ENCODE measurements at regions of chr1 and their contacts with region 1.

Region 1: DNA sequence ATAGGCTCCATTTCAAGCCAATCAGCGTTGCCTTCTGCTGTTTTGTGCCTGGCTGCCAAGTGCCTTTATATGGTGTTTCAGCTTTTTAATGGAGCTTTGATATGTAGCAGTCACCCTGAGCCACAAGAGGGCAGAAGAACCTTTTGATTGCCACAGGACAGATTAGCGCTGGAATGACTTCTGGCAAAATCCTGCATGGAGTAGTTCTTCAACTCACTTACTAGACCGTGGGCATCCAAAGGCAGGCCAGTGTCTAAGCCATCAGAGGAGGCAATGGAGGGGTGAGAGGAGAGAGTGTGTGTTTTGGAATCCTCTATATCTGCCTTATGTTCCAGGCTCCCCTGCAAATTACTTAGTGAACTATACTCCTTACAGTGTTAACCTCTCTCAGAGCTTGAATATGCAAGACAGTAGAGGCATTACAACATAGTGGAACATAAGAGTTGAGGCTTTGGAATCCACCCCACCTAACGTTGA is 56.2 kb downstream of the ST3GAL3 start:
- DNase-seq: peak; percentile 39 to 63
- H3K4me3 ChIP-seq: no peak overlapping the region
- H3K27ac ChIP-seq: no peak overlapping the region
- H3K4me1 ChIP-seq: peaks cover 7 to 24% (median 21%) of the 10 kb centered on the region in 4 experiments
- H3K27me3 ChIP-seq: no peaks in the 10 kb centered on the region
- CTCF ChIP-seq: peak; percentile 26 to 93 (median 90)
- EP300 ChIP-seq: no peak
- POLR2A ChIP-seq: no peak
- RAD21 ChIP-seq: peak; percentile 99

Region 2: GRCh38 chr1:43776043-43776761 is 12.7 kb after region 1 on chr1:
- CTCF ChIA-PET with region 1: interaction called, 13 read pairs
- POLR2A ChIA-PET with region 1: interaction called, 3 read pairs
- DNase-seq: no peak
- H3K4me3 ChIP-seq: no peak overlapping the region
- H3K27ac ChIP-seq: no peak overlapping the region
- H3K4me1 ChIP-seq: peaks cover 0 to 3% (median 0%) of the 10 kb centered on the region in 4 experiments; a peak in 1 of 7 replicates
- H3K27me3 ChIP-seq: no peaks in the 10 kb centered on the region
- CTCF ChIP-seq: no peak
- EP300 ChIP-seq: no peak
- POLR2A ChIP-seq: no peak
- RAD21 ChIP-seq: no peak

Region 3: GRCh38 chr1:43844114-43844513 is 80.6 kb after region 1 on chr1:
- CTCF ChIA-PET with region 1: interaction called, 19 read pairs
- POLR2A ChIA-PET with region 1: interaction called, 3 read pairs
- DNase-seq: no peak
- H3K4me3 ChIP-seq: no peak overlapping the region
- H3K27ac ChIP-seq: no peak overlapping the region
- H3K4me1 ChIP-seq: peaks cover 5 to 13% (median 7%) of the 10 kb centered on the region in 4 experiments
- H3K27me3 ChIP-seq: no peaks in the 10 kb centered on the region
- CTCF ChIP-seq: no peak
- EP300 ChIP-seq: no peak
- POLR2A ChIP-seq: no peak
- RAD21 ChIP-seq: no peak

Region 4: GRCh38 chr1:43902058-43902831 is 138.7 kb after region 1 on chr1:
- CTCF ChIA-PET with region 1: interaction called, 36 read pairs
- POLR2A ChIA-PET with region 1: no interaction called
- DNase-seq: no peak
- H3K4me3 ChIP-seq: no peak overlapping the region
- H3K27ac ChIP-seq: no peak overlapping the region
- H3K4me1 ChIP-seq: no peaks in the 10 kb centered on the region
- H3K27me3 ChIP-seq: no peaks in the 10 kb centered on the region
- CTCF ChIP-seq: no peak
- EP300 ChIP-seq: no peak
- POLR2A ChIP-seq: no peak
- RAD21 ChIP-seq: no peak

Region 5: DNA sequence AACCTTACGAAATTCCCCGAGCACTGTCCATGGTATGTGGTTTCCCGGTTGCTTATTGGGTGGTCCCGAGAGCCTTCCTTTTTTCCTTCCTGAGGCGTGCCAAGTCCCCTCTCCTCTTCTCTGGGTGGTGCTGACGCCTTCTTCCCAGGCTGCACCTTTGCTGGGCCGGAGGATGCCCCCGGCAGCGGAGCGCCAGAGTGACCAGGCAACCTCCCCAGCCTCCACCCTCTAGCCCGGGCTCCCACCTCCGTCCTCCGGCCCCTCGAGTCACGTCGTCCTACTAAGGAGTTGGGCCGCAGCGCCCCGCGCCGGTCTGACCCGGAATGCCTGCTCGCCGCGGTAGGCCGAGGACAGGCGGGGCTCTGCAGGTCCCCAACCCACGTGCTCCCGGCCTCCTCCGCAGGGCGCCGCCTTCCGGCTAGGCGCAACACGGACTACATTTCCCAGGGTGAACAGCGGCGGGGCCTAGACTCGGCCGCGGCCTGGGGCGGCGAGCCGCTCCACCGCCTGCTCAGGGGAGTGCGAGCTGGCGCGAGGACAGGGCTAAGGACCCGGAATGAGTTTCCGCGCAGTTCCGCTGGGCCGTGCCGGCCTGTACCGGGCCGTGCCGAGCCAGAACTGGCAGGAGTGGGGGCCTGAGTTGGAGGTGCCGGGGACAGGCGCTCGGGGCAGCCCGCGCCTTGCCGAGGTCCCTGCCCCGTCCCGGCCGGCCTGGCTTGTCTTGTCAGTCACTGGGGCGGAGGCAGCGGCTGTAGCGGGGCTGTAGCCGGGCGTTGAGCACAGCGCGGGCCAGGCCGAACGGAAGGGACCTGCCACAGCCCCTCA is 182.9 kb after region 1 on chr1 and contains the start of gene IPO13:
- CTCF ChIA-PET with region 1: interaction called, 112 read pairs
- POLR2A ChIA-PET with region 1: interaction called, 8 read pairs
- DNase-seq: peak; percentile 93 to 97
- H3K4me3 ChIP-seq: peak within 1 kb of the TSS; percentile 44 to 90 (median 76)
- H3K27ac ChIP-seq: peak within 1 kb of the TSS; percentile 99
- H3K4me1 ChIP-seq: peaks cover 0 to 17% (median 4%) of the 10 kb centered on the region in 4 experiments; a peak in 5 of 7 replicates
- H3K27me3 ChIP-seq: no peaks in the 10 kb centered on the region; a peak in 1 of 7 replicates
- CTCF ChIP-seq: peak; percentile 75 to 85 (median 82)
- EP300 ChIP-seq: no peak
- POLR2A ChIP-seq: no peak
- RAD21 ChIP-seq: peak; percentile 71 to 77
- total RNA-seq, gene IPO13: 20.7 and 23.0 TPM in 2 replicates

Region 6: DNA sequence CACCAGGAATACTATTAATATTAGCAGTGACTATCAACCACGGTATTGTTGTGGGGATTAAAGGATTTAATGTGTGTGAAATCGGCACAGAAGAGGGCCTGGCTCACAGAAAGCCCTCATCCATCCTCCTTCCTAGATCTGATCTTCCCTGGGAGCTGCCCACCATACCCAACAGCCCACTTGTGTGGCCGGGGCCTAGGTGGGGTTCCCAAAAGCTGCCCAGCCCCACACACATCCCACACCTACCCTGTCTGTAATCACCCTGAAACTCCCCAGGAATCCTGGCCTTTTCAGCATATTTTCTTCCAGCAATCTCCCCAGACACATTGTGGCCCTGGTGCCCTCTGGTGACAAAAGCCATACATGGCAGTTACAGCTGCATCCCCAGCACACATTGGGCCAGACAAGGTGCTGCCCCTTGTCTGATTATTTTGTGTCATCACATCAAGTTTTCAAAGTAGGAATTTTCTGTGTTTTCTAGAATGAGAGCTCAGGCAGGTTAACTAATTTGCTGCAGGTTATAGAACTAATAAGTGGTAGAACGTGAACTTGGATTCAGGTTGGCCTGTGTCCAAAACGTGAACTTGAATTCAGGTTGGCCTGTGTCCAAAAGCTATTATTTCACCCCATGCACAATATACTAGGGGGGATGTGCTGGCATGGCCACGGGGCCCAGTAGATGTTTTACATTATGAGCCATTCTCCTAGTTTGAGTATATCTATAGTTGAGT is 273.0 kb after region 1 on chr1:
- CTCF ChIA-PET with region 1: interaction called, 10 read pairs
- POLR2A ChIA-PET with region 1: no interaction called
- DNase-seq: peak; percentile 23 to 80
- H3K4me3 ChIP-seq: no peak overlapping the region
- H3K27ac ChIP-seq: no peak overlapping the region
- H3K4me1 ChIP-seq: peaks cover 6 to 20% (median 12%) of the 10 kb centered on the region in 4 experiments; a peak in 6 of 7 replicates
- H3K27me3 ChIP-seq: no peaks in the 10 kb centered on the region
- CTCF ChIP-seq: peak; percentile 90 to 92 (median 91)
- EP300 ChIP-seq: no peak
- POLR2A ChIP-seq: no peak
- RAD21 ChIP-seq: peak; percentile 81 to 88